ENCODE measurements at regions of chr14 and their contacts with region 1.

Region 1: GRCh38 chr14:56474419-56475022 is 105.1 kb upstream of the TMEM260 start:
- DNase-seq: no peak
- ATAC-seq: peak; percentile 50
- H3K4me3 ChIP-seq: no peak overlapping the region
- H3K27ac ChIP-seq: no peak overlapping the region
- H3K4me1 ChIP-seq: no peaks in the 10 kb centered on the region
- H3K27me3 ChIP-seq: no peaks in the 10 kb centered on the region
- CTCF ChIP-seq: peak; percentile 73 to 88 (median 86)
- POLR2A ChIP-seq: no peak

Region 2: DNA sequence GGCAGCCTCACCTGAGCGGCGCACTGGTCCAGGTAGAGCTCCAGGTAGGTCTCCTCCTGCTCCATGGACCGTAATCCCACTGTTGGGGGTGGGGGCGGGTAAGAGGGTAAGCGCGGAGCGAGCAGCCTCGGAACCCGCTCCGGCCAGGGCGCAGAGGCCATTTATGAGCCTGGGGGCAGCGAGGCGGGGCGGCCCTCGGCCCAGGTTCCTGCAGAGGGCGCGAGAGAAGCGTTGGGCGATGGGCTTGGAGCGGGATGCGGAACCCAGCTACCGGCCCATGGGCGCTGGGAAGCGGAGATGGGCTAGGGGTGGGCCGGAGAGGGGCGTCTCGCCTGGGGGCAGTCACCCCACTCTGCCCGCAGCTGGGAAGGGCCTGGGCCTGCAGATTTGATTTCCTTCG is 1034.1 kb before region 1 on chr14 and contains the start of gene TBPL2:
- intact Hi-C with region 1: loop called (anchors 5 kb)
- DNase-seq: no peak
- ATAC-seq: no peak
- H3K4me3 ChIP-seq: no peak within 1 kb of the TSS
- H3K27ac ChIP-seq: no peak within 1 kb of the TSS
- H3K4me1 ChIP-seq: no peaks in the 10 kb centered on the region
- H3K27me3 ChIP-seq: no peaks in the 10 kb centered on the region
- CTCF ChIP-seq: no peak
- POLR2A ChIP-seq: no peak
- total RNA-seq, gene TBPL2: not detected

Region 3: DNA sequence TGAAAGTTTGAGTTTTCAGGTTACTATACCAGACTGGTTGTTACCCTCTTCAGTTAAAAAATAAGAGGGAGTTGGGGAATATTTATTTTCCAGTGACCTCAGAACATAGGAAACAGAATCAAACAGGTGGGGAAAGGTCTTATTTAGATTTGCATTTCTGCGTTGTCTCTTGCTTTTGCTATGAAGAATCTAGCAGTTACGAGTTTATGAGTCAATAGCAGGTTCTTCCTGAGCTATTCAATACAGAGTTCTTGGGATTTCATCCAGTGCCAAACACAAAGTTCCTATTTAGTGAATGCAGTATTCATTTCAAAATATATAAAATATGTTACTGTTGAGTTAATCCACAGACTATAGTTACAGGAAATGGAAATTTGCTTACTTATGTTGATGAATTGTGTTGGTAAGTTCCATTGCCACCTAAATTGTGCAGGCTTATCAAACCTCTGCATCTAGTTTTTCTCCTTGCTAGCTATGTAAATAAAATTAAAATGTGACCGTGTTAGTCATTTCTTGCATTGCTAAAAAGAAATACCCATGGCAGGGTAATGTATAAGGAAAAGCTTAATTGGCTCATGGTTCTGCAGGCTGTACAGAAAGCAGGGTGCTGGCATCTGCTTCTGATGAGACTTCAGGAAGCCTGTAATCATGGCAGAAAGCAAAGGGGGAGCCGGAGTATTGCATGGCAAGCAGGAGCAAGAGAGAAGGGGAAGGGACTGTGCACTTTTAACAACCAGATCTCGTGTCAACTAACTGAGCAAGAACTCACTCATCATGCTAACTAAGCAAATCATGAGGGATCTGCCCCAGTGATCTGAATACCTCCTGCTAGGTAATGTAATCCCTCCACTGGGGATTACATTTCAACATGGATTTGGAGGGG is 784.3 kb before region 1 on chr14:
- intact Hi-C with region 1: no loop called
- DNase-seq: no peak
- ATAC-seq: no peak
- H3K4me3 ChIP-seq: no peak overlapping the region
- H3K27ac ChIP-seq: no peak overlapping the region
- H3K4me1 ChIP-seq: no peaks in the 10 kb centered on the region
- H3K27me3 ChIP-seq: no peaks in the 10 kb centered on the region
- CTCF ChIP-seq: no peak
- POLR2A ChIP-seq: no peak

Region 4: GRCh38 chr14:55707365-55707804 is 767.1 kb before region 1 on chr14:
- intact Hi-C with region 1: loop called (anchors 10 kb)
- DNase-seq: no peak
- ATAC-seq: peak; percentile 56
- H3K4me3 ChIP-seq: no peak overlapping the region
- H3K27ac ChIP-seq: no peak overlapping the region
- H3K4me1 ChIP-seq: peaks cover 5% of the 10 kb centered on the region
- H3K27me3 ChIP-seq: no peaks in the 10 kb centered on the region
- CTCF ChIP-seq: peak; percentile 17 to 75 (median 75)
- POLR2A ChIP-seq: no peak

Region 5: GRCh38 chr14:56648508-56649301 is 174.2 kb after region 1 on chr14:
- intact Hi-C with region 1: no loop called
- DNase-seq: no peak
- ATAC-seq: no peak
- H3K4me3 ChIP-seq: no peak overlapping the region
- H3K27ac ChIP-seq: no peak overlapping the region
- H3K4me1 ChIP-seq: no peaks in the 10 kb centered on the region
- H3K27me3 ChIP-seq: no peaks in the 10 kb centered on the region
- CTCF ChIP-seq: no peak
- POLR2A ChIP-seq: no peak